ENCODE measurements at regions of chrX and their contacts with region 1.

Region 1: DNA sequence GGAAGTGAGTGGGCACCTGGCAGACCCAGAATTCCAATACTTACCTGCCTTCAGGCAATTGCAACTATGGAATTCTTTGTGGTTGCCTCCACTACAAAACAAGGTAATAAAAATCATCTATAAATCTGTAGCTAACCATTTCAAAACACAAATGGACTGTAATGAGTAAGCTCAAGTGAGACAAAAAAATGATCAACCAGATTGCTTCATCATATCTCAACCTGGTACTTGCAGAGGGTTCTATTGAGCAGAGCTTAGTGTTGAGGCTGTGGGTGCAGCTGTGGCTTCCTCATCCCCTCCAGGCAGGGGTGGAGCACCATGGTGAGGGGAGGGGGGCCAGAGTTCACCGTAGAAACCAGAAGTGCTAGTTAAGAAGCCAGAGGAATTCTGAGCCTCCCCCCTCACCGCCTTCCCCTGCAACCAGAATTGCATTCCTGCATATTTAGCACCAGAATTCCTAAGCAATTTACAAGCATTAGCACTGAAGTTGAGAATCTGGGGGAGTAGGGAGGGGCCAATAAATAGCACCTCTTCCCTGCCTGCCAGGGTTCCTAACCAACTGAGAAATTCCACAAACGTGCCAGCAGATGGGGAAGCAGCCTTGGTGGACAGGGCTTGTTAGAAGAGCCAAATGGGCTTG is 11.5 kb downstream of the CTAG1A start:
- DNase-seq: no peak
- CTCF ChIP-seq: no peak

Region 2: GRCh38 chrX:154472688-154473632 is 123.5 kb before region 1 on chrX:
- in situ Hi-C with region 1: no loop called
- DNase-seq: no peak
- CTCF ChIP-seq: no peak

Region 3: DNA sequence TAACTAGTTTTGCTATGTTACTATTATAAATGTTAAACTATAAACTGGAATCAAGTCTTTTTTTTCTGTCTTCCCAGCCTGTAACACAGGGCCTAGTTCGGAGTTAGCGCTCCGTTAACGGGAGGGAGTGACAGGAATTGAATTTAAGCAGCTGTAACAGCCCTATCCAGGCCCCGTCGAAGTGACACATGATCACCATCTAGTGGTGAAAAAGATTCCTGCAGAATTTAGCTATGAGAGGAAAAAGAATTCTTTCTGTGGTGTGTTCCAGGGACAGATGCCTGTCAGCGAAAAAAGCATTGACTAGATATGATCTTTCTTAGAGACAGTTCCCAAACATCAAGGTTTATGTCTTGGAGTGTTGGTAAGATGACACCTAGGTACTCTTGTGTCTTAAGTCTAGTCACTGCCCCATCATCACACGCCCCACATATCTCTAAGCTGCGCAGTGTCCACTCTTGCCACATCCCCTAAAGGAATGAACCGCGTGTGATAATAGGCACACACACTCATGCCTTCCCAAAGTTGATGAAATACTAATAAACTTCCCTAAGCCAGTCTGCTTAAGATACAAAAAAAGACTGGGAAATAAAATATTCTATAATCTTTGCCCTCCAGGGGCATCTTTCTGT is 152.4 kb after region 1 on chrX:
- in situ Hi-C with region 1: loop called (anchors 25 kb)
- DNase-seq: peak; percentile 57
- CTCF ChIP-seq: peak; percentile 70

Region 4: GRCh38 chrX:154840856-154841255 is 244.4 kb after region 1 on chrX:
- in situ Hi-C with region 1: loop called (anchors 25 kb)
- DNase-seq: peak; percentile 42
- CTCF ChIP-seq: peak; percentile 51

Measured in GM13977 (cell line).